ENCODE measurements at regions of chr4 and their contacts with region 1.

Region 1: DNA sequence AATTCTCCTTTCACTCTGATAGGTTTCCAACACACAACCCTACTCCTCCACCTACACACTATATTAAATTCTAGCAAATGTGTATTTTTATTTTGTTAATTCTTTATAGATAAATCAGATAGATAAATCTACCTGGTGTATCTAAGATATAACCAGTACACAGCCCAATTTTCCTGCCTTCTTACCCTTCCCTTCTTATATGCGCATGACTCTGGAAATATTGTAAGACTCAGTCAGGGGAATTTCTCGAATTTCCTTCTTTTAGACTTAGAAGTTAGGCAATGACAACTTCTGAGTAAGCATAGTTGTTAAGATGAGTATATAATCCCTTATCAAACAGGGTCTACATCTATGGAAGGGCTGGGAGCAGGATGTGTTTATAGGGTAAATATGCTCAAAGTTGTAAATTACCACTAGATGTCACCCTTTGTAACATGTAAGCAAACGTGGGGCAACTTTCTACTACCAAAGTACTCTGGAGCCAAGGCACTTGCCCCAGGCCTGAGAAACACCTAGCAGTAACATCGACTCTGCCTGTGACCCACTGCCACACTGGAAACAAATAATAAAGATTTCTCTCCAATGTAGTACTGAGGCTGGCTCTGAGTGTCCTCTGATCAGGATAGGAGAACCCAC is 444.7 kb downstream of the IQCM start:
- DNase-seq: peak; percentile 16 to 59 (median 36)
- H3K4me3 ChIP-seq: no peak overlapping the region
- H3K27ac ChIP-seq: no peak overlapping the region
- H3K4me1 ChIP-seq: no peaks in the 10 kb centered on the region
- H3K27me3 ChIP-seq: no peaks in the 10 kb centered on the region
- CTCF ChIP-seq: peak in 5 of 6 experiments; percentile 42 to 56 (median 51)
- POLR2A ChIP-seq: no peak

Region 2: GRCh38 chr4:148749403-148749802 is 621.5 kb before region 1 on chr4:
- intact Hi-C with region 1: no loop called
- DNase-seq: no peak
- H3K4me3 ChIP-seq: no peak overlapping the region
- H3K27ac ChIP-seq: no peak overlapping the region
- H3K4me1 ChIP-seq: no peaks in the 10 kb centered on the region
- H3K27me3 ChIP-seq: no peaks in the 10 kb centered on the region
- CTCF ChIP-seq: no peak
- POLR2A ChIP-seq: no peak

Region 3: DNA sequence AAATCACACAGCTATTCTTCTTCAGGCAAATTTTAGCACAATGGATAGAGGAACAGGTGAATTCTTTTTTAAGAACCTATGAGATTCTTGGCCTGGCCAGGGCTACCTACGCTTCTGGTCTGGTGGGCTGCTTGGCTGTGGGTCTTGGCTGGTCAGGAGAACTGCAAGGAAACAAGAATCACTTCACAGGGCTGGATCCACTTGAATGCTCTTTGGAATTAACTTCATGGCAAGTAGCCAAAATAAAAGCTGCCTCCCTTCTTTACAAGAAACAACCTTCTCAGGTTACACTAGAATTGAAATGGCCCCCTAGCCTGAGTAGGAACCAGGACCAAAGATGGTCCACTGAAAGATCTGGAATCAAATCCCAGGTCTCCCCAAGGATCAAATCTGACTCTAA is 74.4 kb before region 1 on chr4:
- intact Hi-C with region 1: no loop called
- DNase-seq: no peak
- H3K4me3 ChIP-seq: no peak overlapping the region
- H3K27ac ChIP-seq: no peak overlapping the region
- H3K4me1 ChIP-seq: no peaks in the 10 kb centered on the region
- H3K27me3 ChIP-seq: no peaks in the 10 kb centered on the region
- CTCF ChIP-seq: no peak
- POLR2A ChIP-seq: no peak

Region 4: DNA sequence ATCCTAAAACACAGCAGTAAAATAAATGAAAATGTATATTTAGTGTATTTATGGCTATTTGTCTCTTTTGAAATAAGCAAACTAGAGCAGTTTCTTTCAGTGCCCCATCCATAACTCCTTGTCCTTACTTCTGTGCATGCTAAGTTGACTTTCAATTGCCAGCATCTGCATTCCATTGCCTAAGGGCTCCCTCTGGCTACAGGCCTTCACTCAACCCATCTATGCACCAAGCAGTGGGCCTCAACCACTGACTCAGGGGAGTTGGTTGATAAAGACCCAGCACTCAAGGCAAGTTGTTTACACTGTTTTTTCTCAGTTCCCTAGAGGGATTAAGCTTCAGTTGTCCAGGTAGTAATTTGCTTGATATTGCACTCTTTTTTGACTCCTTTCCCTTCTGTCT is 179.0 kb after region 1 on chr4:
- intact Hi-C with region 1: loop called in 1 of 2 experiments (anchors 5 kb)
- DNase-seq: peak; percentile 16 to 51 (median 31)
- H3K4me3 ChIP-seq: no peak overlapping the region
- H3K27ac ChIP-seq: no peak overlapping the region
- H3K4me1 ChIP-seq: no peaks in the 10 kb centered on the region
- H3K27me3 ChIP-seq: no peaks in the 10 kb centered on the region
- CTCF ChIP-seq: peak in 5 of 6 experiments; percentile 35 to 55 (median 41)
- POLR2A ChIP-seq: no peak

Region 5: DNA sequence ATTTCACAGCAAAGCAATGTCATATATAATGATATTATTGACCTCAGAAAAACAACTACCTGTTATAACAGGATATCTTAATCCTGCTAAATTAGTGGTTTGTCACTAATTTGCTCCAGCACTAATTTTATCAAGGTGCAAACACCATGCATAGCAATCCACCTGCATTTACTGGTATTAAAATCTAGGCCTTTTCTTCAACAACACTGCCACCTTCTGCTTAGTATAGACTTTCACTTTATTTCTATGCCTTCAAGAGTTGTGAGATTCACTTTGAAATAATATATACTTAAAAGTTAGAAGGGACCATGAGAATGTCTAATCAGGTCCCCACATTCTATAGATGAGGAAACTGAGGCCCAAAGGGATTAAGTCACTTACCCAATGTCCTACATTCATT is 526.9 kb after region 1 on chr4:
- intact Hi-C with region 1: loop called in 1 of 2 experiments (anchors 10 kb)
- DNase-seq: no peak
- H3K4me3 ChIP-seq: no peak overlapping the region
- H3K27ac ChIP-seq: no peak overlapping the region
- H3K4me1 ChIP-seq: no peaks in the 10 kb centered on the region
- H3K27me3 ChIP-seq: no peaks in the 10 kb centered on the region
- CTCF ChIP-seq: peak in 4 of 6 experiments; percentile 9 to 32 (median 22)
- POLR2A ChIP-seq: no peak

Measured in adrenal gland (tissue), 19 donors.